ENCODE measurements at regions of chr1 and their contacts with region 1.

Region 1: GRCh38 chr1:51569284-51570062 is 47.4 kb upstream of the OSBPL9 start:
- DNase-seq: peak in 1 of 10 donors; percentile 15

Region 2: DNA sequence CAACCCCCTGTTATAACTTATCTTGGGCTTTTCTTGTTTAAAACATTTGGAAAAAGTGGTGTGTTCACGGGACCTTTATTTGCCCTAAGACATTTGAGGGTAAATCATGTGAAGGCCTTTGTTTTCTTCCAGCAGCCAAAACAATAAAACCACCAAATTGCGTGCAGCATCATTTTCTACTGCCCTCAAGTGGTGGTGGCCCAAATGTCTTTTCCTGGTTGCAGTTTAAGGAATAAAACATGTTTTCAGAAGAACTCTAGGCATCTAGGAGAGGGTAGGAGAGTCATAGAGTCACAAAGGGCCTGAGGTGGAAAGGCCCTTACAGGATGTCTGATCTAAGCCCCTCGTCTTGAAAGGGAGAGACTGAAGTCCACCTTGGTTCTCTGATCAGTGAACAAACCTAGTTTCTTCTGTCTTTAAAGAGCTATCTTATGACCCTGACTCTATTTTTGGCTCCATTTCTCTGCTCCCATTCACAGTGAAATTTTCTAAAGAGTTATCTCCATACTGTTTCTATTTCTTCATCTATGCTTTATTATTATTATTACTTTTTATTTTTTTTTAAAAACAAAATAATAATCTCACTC is 34.4 kb before region 1 on chr1:
- intact Hi-C with region 1: no loop called
- DNase-seq: peak in 7 of 10 donors; percentile 27 to 92 (median 68)

Region 3: DNA sequence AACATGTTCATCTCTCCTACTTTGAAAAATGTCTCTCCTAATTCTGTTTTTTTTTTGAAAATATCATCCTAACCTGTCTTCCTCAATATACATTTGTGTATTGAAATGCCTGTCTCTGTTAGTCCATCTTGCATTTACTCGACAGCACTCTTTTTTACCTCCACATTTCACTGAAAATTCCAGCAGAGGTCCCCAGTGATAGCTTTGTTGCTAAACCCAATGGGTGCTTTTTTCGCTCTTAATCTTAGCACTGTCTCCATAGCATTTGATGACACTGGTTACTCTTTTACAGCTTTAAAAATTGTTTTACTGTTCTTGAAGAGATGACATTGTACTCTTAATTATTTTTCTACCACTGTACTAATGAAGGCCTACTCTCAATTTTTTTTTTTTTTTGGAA is 58.2 kb after region 1 on chr1:
- intact Hi-C with region 1: no loop called
- DNase-seq: no peak

Region 4: DNA sequence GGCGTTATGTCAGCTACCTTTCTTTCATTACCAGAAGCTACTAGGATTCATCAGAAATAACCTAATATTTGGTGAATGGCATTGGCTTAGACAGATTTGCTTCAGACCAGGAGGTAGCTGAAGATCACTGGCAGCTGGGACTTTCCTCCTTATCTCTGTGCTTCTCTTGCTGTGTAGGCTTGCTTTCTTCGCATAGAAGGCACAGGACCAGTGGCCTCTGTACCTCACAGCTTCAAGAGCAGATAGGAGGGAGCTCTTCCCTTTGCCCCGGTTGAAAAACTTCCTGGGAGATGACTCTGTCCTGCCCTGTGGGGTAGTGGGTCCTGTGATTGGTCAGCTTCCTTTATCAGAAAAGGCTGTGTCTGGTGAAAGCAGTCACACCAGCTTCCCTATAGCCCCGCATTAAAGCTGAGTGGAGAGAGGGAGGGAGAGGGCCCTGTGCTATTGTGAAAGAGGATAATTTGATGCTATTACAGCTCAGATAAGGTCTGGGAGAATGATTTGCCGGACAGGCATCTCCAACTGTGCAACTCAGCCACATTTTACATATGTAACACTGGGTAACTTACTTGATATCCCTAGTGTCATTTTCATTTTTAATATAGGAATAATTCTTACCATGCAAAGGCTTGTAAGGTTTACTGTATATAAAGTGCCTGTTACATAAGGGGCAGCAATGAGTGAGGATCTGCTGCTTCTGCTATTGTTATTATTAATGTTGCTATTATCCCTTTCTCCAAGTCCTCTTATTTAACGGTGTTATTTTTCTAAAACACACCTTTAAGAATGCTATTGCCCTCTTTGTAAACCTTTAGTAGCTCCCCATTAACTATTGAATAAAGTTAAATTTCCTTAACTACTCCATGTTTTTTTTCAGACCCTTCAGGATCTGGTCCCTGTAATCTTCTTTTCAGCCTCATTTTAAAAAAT is 79.0 kb after region 1 on chr1:
- intact Hi-C with region 1: no loop called
- DNase-seq: no peak

Region 5: DNA sequence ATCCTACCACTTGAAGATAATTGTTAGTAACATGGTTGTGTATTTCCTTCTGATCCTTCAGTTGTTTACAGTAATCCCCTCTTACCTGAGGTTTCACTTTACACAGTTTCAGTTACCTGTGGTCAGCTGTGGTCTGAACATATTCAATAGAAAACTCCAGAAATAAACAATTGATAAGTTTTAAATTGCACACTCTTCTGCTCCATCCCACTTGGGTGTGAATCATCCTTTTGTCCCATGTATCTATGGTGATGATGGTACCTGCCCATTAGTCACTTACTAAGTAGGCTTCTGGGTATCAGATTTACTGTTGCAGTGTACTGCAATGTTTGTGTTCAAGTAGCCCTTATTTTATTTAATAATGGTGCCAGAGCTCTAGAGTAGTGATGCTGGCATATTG is 110.0 kb after region 1 on chr1:
- intact Hi-C with region 1: no loop called
- DNase-seq: no peak

Region 6: GRCh38 chr1:51768971-51769588 is 199.6 kb after region 1 on chr1:
- intact Hi-C with region 1: loop called (anchors 5 kb)
- DNase-seq: peak in 2 of 10 donors; percentile 18 to 23

Measured in posterior cingulate gyrus (tissue), 11 donors.